Naive thymus-derived CD4-positive, alpha-beta T cell (primary cell): ENCODE measurements at regions of chr2 and their contacts with region 1.

Region 1: DNA sequence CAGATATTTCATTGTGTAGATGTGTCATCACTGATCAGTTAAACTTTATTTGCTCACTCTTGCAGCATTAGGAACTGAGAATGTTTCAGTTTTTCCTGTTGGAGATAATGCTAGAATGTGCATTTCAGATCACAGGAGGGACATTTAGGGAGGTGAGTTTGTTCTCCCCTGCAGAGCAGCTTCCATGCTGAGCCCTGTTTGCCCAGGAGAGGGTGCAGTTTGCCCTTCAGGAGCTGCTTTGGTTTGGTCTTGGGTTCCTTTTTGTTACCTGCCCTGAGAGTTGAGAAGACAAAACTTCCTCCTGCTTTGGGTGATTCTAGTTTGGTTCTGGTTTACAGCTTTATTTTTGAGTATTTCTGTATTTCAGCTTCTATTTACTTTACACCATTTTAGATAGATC is 49.9 kb downstream of the DGKD start:
- DNase-seq: peak in 7 of 9 donors; percentile 66 to 82 (median 75)
- ATAC-seq: peak; percentile 77
- H3K4me3 ChIP-seq: no peak overlapping the region
- H3K4me3 Mint-ChIP-seq: peak overlapping the region in 7 of 10 donors; percentile 6 to 52 (median 22)
- H3K27ac ChIP-seq: peak overlapping the region; percentile 27
- H3K27ac Mint-ChIP-seq: peak overlapping the region; percentile 48 to 96 (median 83)
- H3K4me1 ChIP-seq: peaks cover 31 to 61% of the 10 kb centered on the region in 2 donors
- H3K4me1 Mint-ChIP-seq: peaks cover 52 to 91% (median 83%) of the 10 kb centered on the region in 7 donors
- H3K27me3 ChIP-seq: no peaks in the 10 kb centered on the region
- H3K27me3 Mint-ChIP-seq: no peaks in the 10 kb centered on the region

Region 2: GRCh38 chr2:232927793-232928550 is 476.2 kb before region 1 on chr2:
- CTCF ChIA-PET with region 1: no interaction called
- POLR2A ChIA-PET with region 1: no interaction called
- intact Hi-C with region 1: no loop called
- DNase-seq: peak in 2 of 9 donors; percentile 11 to 30
- ATAC-seq: peak; percentile 41
- H3K4me3 ChIP-seq: no peak overlapping the region
- H3K4me3 Mint-ChIP-seq: peak overlapping the region in 2 of 10 donors; percentile 8 to 84
- H3K27ac ChIP-seq: no peak overlapping the region
- H3K27ac Mint-ChIP-seq: no peak overlapping the region
- H3K4me1 ChIP-seq: no peaks in the 10 kb centered on the region
- H3K4me1 Mint-ChIP-seq: peaks cover 0 to 23% (median 17%) of the 10 kb centered on the region in 7 donors
- H3K27me3 ChIP-seq: peaks cover 0 to 7% of the 10 kb centered on the region in 2 donors
- H3K27me3 Mint-ChIP-seq: peaks cover 57 to 71% (median 64%) of the 10 kb centered on the region in 5 donors

Region 3: GRCh38 chr2:233303252-233303651 is 101.0 kb before region 1 on chr2:
- CTCF ChIA-PET with region 1: no interaction called
- POLR2A ChIA-PET with region 1: no interaction called
- intact Hi-C with region 1: no loop called
- DNase-seq: no peak
- ATAC-seq: no peak
- H3K4me3 ChIP-seq: no peak overlapping the region
- H3K4me3 Mint-ChIP-seq: no peak overlapping the region
- H3K27ac ChIP-seq: no peak overlapping the region
- H3K27ac Mint-ChIP-seq: peak overlapping the region in 1 of 9 donors; percentile 20
- H3K4me1 ChIP-seq: no peaks in the 10 kb centered on the region
- H3K4me1 Mint-ChIP-seq: peaks cover 0 to 11% (median 4%) of the 10 kb centered on the region in 7 donors
- H3K27me3 ChIP-seq: no peaks in the 10 kb centered on the region
- H3K27me3 Mint-ChIP-seq: peaks cover 0 to 3% (median 0%) of the 10 kb centered on the region in 5 donors

Region 4: DNA sequence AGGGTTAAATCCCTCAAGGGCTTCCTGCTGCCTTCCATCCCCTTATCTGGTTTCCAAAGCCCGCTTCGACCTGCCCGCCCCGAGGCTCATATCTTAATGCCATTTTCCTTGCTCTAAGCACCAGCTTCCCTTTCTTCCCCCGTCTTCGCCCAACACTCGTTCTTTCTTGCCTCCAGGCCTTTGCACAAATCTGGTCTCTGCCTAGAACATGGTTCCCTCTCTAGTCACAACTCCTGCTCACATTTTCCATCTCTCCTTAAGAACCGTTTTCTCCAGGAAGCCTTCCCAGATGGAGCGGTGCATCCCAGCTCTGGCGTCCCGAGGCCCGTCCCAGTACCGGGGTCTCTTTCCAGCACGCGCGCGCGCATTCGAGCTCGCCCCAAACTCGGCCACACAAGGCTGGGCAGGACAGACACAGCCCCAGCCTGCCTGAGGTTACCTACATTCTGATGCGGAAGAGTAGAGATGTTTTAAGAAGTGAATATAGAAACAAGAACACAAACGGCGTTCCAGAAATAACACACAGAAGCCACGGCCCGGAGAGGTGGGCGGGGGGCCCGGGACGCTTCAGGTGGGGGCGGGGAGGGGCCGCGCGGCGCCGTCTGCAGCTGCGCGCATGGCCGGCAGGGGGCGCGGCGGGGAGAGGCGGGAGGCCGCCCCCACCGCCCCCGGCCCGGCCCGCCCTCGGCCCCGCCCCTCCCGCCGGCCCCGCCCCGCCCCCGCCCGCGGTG is 50.3 kb before region 1 on chr2 and contains the start of gene DGKD:
- CTCF ChIA-PET with region 1: interaction called, 9 read pairs
- POLR2A ChIA-PET with region 1: interaction called, 7 read pairs
- intact Hi-C with region 1: loop called in 1 of 2 experiments (anchors 2 kb)
- DNase-seq: peak; percentile 42 to 81 (median 69)
- ATAC-seq: peak; percentile 96
- H3K4me3 ChIP-seq: peak within 1 kb of the TSS; percentile 83
- H3K4me3 Mint-ChIP-seq: peak within 1 kb of the TSS; percentile 92 to 98 (median 94)
- H3K27ac ChIP-seq: peak within 1 kb of the TSS; percentile 72
- H3K27ac Mint-ChIP-seq: peak within 1 kb of the TSS; percentile 86 to 96 (median 92)
- H3K4me1 ChIP-seq: peaks cover 36 to 42% of the 10 kb centered on the region in 2 donors
- H3K4me1 Mint-ChIP-seq: peaks cover 57 to 74% (median 67%) of the 10 kb centered on the region in 7 donors
- H3K27me3 ChIP-seq: no peaks in the 10 kb centered on the region
- H3K27me3 Mint-ChIP-seq: no peaks in the 10 kb centered on the region
- total RNA-seq, gene DGKD: 61.6 to 252 (median 213) TPM

Region 5: DNA sequence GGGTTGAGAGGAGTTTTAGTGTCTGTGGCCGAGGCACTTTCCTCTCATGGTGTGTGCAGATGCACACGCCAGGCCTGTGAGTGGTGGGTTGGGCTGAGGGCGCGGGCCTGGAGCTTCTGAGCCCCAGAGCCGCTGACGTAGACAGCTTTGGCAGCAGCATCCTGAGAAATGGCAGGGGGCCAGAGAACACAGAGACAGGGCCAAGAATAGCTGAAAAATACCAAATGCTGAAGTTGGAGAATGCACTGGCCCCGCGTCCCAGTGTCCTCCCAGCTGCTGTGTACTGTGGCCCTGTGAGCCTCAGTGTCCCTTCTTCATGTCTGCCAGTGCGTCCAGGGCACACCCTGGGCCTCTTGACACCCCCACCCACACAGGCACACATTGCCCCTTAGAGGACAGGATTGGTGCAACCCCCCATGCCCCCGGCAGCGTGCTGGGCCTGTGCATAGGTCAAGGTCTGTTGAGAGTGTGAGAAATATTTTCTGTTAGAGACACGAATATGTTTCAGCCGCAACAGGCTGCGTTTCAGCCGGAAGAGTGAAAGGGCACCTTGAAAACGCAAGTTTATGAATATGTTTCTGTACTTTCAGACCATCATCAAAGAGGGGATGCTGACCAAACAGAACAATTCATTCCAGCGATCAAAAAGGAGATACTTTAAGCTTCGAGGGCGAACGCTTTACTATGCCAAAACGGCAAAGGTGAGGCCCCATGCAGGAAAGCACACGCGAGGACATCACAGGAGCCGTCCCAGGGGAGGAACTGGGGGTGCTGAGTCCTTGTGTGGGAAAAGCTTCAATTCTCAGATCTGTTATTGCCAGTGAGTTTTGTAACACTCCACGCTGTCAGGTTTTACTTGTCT is 16.3 kb before region 1 on chr2:
- CTCF ChIA-PET with region 1: interaction called, 37 read pairs
- POLR2A ChIA-PET with region 1: interaction called, 3 read pairs
- intact Hi-C with region 1: loop called in 1 of 2 experiments (anchors 2 kb)
- DNase-seq: no peak
- ATAC-seq: no peak
- H3K4me3 ChIP-seq: no peak overlapping the region
- H3K4me3 Mint-ChIP-seq: peak overlapping the region in 5 of 10 donors; percentile 7 to 73 (median 65)
- H3K27ac ChIP-seq: no peak overlapping the region
- H3K27ac Mint-ChIP-seq: peak overlapping the region in 6 of 9 donors; percentile 32 to 98 (median 91)
- H3K4me1 ChIP-seq: peaks cover 44 to 47% of the 10 kb centered on the region in 2 donors
- H3K4me1 Mint-ChIP-seq: peaks cover 39 to 76% (median 62%) of the 10 kb centered on the region in 7 donors
- H3K27me3 ChIP-seq: no peaks in the 10 kb centered on the region
- H3K27me3 Mint-ChIP-seq: no peaks in the 10 kb centered on the region

Region 6: DNA sequence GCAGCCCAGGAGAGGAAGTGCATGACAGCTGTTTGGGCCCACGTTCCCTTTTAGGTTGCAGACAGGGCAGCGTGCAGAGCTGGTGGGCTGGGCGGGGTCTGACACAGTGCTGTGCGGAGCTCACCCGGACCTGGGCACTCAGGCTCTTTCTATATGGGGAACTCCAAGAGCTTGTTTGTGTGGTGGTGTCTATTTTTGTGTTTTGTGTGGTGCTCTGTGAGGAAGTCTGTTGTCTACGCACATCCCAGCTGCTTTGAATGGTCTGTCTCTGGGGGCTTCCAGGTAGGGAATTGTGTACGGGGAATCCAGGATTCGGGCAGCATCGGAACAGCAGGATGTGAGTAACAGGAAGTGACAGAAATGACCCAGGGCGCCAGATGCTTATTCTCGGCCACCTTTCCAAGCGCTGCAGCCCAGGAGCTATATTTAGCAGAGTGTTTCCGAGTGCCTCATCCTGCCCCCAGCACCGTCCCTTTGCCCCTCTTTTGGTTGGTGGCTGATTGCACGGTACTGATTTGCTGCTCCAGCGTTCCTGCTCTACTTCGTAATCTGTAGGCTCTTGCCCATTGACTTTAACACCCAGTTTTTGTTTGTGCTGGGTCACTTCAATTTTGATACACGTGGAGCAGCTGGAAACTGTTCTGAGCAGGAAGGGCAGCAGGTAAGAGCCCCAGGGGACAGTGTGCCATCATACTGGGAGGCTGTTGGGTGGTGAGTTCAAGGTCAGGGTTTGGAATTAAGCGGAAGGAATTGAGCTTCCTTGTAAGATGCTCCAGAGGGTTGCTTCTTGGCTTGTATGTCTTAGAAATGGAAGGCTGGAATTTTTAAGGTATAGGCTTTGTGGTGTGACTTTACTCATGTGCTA is 14.8 kb after region 1 on chr2:
- CTCF ChIA-PET with region 1: interaction called, 255 read pairs
- POLR2A ChIA-PET with region 1: interaction called, 143 read pairs
- intact Hi-C with region 1: loop called (anchors 1 to 2 kb)
- DNase-seq: peak in 6 of 9 donors; percentile 40 to 69 (median 50)
- ATAC-seq: peak; percentile 74
- H3K4me3 ChIP-seq: peak overlapping the region; percentile 70
- H3K4me3 Mint-ChIP-seq: peak overlapping the region; percentile 84 to 99 (median 92)
- H3K27ac ChIP-seq: peak overlapping the region; percentile 80
- H3K27ac Mint-ChIP-seq: peak overlapping the region; percentile 86 to 99 (median 97)
- H3K4me1 ChIP-seq: peaks cover 65 to 93% of the 10 kb centered on the region in 2 donors
- H3K4me1 Mint-ChIP-seq: peaks cover 78 to 100% (median 96%) of the 10 kb centered on the region in 7 donors
- H3K27me3 ChIP-seq: no peaks in the 10 kb centered on the region
- H3K27me3 Mint-ChIP-seq: no peaks in the 10 kb centered on the region

Region 7: DNA sequence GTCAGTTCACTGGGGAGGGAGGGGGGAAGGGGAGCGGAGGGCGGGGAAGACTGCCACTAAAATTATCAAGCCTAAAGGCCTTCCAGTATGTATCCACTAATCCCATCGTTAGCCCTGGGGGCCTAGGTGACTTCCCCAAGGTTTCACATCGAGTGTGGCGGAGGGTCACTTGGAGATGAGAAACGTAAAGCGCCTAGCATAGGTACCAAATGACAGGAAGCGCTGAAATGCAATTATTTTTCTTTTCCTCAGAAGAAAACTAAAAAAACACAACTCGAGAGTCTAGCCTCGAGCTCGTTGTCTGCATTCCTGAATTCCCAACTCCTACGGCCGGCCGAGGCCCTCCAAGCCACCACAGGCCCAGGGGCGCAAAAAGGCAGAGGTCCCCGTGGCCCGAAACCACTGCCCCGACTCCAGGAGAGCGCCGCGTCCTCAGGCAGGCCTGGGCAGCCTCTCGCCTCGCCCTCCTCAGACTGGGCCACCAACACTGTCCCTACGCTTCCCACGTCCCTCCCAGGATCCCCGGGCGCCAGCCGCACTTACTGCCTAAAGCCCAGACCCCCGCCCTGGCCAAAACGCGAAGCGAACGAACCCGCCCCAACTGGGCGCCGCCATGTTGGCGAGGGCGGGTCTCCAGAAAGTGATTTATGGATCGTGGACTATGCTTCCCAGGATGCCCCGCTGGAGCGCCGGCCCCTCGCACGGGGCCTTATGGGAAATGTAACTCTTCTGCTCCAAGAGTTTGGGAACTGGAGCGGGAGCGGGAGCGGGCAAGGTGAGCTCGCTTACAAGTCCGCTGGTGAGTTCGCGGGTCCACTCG is 162.1 kb after region 1 on chr2 and contains the start of gene USP40:
- CTCF ChIA-PET with region 1: no interaction called
- POLR2A ChIA-PET with region 1: no interaction called
- intact Hi-C with region 1: loop called in 1 of 2 experiments (anchors 10 kb)
- DNase-seq: peak; percentile 27 to 60 (median 39)
- ATAC-seq: peak; percentile 86
- H3K4me3 ChIP-seq: peak within 1 kb of the TSS; percentile 75
- H3K4me3 Mint-ChIP-seq: peak within 1 kb of the TSS; percentile 92 to 97 (median 94)
- H3K27ac ChIP-seq: peak within 1 kb of the TSS; percentile 87
- H3K27ac Mint-ChIP-seq: peak within 1 kb of the TSS; percentile 70 to 97 (median 95)
- H3K4me1 ChIP-seq: no peaks in the 10 kb centered on the region
- H3K4me1 Mint-ChIP-seq: peaks cover 7 to 21% (median 14%) of the 10 kb centered on the region in 7 donors
- H3K27me3 ChIP-seq: no peaks in the 10 kb centered on the region
- H3K27me3 Mint-ChIP-seq: peaks cover 0 to 22% (median 0%) of the 10 kb centered on the region in 5 donors
- total RNA-seq, gene USP40: 14.4 to 24.3 (median 20.8) TPM

Region 8: DNA sequence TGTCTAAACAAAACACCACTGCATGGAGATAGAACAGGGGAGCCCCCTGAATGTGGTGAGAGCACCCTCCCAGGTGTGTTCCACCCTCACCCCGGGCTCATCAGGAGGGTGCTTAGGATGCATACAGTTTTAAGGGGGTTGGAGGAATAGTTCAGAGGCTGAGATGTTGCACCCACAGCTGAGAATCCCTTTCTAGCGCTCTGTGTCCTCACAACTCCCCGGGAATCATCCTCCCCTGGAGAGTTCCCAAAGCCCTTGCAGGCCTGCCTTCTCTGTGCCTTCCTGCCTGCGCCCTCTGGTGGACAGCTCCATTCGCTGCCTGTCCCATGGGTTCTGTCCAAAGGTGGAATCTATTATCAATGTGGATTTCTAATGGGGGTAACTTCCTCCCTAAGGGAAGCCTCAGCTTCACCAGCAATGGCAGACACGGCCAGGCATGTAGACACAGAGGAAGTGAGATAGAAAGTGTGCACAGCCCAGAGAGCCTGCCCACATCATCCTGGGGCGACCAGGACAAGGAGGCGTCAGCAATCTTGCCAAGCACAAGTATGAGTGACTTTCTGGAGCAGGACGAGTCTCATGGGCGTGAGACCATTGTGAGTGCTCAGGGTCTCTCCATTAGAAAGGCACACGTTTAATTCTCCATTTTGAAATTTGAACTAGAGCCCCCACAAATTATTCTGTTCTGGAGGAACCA is 307.2 kb after region 1 on chr2:
- CTCF ChIA-PET with region 1: no interaction called
- POLR2A ChIA-PET with region 1: no interaction called
- intact Hi-C with region 1: loop called (anchors 2 to 5 kb)
- DNase-seq: peak; percentile 16 to 66 (median 48)
- ATAC-seq: peak; percentile 75
- H3K4me3 ChIP-seq: no peak overlapping the region
- H3K4me3 Mint-ChIP-seq: no peak overlapping the region
- H3K27ac ChIP-seq: no peak overlapping the region
- H3K27ac Mint-ChIP-seq: peak overlapping the region in 1 of 9 donors; percentile 17
- H3K4me1 ChIP-seq: no peaks in the 10 kb centered on the region
- H3K4me1 Mint-ChIP-seq: peaks cover 0 to 5% (median 0%) of the 10 kb centered on the region in 7 donors
- H3K27me3 ChIP-seq: peaks cover 0 to 6% of the 10 kb centered on the region in 2 donors
- H3K27me3 Mint-ChIP-seq: peaks cover 21 to 40% (median 23%) of the 10 kb centered on the region in 5 donors